Calu3 (cell line): ENCODE measurements at regions of chr15 and their contacts with region 1.

Region 1: DNA sequence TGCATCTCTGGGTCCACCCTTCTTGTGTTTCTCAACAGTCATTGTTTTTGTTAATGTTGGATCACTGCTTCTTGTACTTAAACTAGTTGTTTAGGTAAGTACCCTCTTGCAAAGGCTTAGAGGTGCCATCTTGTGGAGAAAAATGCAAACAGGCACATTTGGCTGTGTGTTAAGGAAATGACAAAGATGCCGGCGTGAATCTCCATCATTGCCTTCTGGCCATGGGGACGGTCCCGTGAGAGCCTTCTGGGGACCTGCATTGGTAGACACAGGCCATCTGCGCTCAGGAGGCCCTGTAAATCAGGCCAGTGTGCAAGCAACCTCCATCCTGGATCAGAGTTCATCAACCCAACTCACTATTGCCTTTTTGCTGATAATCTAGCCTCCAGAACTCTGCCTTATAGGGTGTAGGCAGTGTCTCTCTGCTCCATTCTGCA is 158.6 kb upstream of the NR2E3 start:
- DNase-seq: peak; percentile 44
- H3K4me3 Mint-ChIP-seq: no peak overlapping the region
- H3K27ac Mint-ChIP-seq: no peak overlapping the region
- H3K4me1 Mint-ChIP-seq: peaks cover 7% of the 10 kb centered on the region
- H3K27me3 Mint-ChIP-seq: no peaks in the 10 kb centered on the region
- CTCF ChIP-seq: no peak

Region 2: DNA sequence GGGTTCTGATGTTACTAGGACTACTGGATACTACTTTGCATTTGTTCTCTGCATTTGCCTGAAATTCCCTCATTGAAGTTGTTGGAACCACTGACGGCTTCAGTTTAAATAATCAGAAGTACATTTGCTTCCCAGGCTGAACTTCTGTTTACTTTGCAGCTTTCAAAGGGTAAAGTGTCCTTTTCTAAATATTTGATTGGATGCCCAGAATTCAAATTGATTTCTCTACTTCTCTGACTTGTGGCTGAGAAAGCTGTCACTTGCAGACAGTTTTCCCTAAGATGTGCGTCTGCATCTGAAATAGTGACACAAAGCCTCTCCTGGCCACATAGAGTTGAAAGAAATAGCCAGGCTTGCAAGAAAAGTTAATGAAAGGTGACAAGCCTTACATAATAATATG is 236.9 kb before region 1 on chr15:
- CTCF ChIA-PET with region 1: no interaction called
- intact Hi-C with region 1: no loop called
- DNase-seq: no peak
- H3K4me3 Mint-ChIP-seq: no peak overlapping the region
- H3K27ac Mint-ChIP-seq: no peak overlapping the region
- H3K4me1 Mint-ChIP-seq: peaks cover 28% of the 10 kb centered on the region
- H3K27me3 Mint-ChIP-seq: no peaks in the 10 kb centered on the region
- CTCF ChIP-seq: no peak

Region 3: GRCh38 chr15:71448688-71449114 is 203.1 kb before region 1 on chr15:
- CTCF ChIA-PET with region 1: no interaction called
- intact Hi-C with region 1: loop called (anchors 1 kb)
- DNase-seq: peak; percentile 72
- H3K4me3 Mint-ChIP-seq: no peak overlapping the region
- H3K27ac Mint-ChIP-seq: no peak overlapping the region
- H3K4me1 Mint-ChIP-seq: no peaks in the 10 kb centered on the region
- H3K27me3 Mint-ChIP-seq: no peaks in the 10 kb centered on the region
- CTCF ChIP-seq: peak; percentile 73

Region 4: GRCh38 chr15:71465131-71465530 is 186.6 kb before region 1 on chr15:
- CTCF ChIA-PET with region 1: no interaction called
- intact Hi-C with region 1: no loop called
- DNase-seq: no peak
- H3K4me3 Mint-ChIP-seq: no peak overlapping the region
- H3K27ac Mint-ChIP-seq: no peak overlapping the region
- H3K4me1 Mint-ChIP-seq: no peaks in the 10 kb centered on the region
- H3K27me3 Mint-ChIP-seq: no peaks in the 10 kb centered on the region
- CTCF ChIP-seq: no peak

Region 5: DNA sequence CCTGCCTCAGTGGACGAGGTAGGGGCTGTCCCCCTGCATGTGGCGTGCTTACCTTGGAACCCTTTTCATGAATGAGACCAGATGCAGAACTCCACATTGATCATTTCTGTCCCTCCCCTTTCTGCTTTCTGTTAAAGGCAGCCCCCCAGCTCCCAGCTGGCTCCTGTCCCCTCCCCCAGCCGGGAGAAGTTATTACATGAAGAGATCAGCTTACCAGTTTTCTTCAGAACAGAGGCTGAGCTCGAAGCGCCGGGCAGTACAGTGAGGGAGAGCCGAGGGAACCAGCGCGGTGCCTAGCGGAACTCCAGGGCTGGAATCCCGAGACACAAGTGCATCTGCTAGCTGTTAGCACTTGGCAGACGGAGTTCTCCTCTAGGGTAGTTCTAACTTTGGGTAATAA is 104.8 kb before region 1 on chr15:
- CTCF ChIA-PET with region 1: no interaction called
- intact Hi-C with region 1: no loop called
- DNase-seq: no peak
- H3K4me3 Mint-ChIP-seq: no peak overlapping the region
- H3K27ac Mint-ChIP-seq: no peak overlapping the region
- H3K4me1 Mint-ChIP-seq: no peaks in the 10 kb centered on the region
- H3K27me3 Mint-ChIP-seq: no peaks in the 10 kb centered on the region
- CTCF ChIP-seq: no peak

Region 6: GRCh38 chr15:71575474-71576045 is 76.2 kb before region 1 on chr15:
- CTCF ChIA-PET with region 1: no interaction called
- intact Hi-C with region 1: loop called (anchors 5 kb)
- DNase-seq: no peak
- H3K4me3 Mint-ChIP-seq: no peak overlapping the region
- H3K27ac Mint-ChIP-seq: no peak overlapping the region
- H3K4me1 Mint-ChIP-seq: peaks cover 11% of the 10 kb centered on the region
- H3K27me3 Mint-ChIP-seq: no peaks in the 10 kb centered on the region
- CTCF ChIP-seq: peak; percentile 62

Region 7: GRCh38 chr15:71812966-71813722 is 161.4 kb after region 1 on chr15:
- CTCF ChIA-PET with region 1: no interaction called
- intact Hi-C with region 1: no loop called
- DNase-seq: no peak
- H3K4me3 Mint-ChIP-seq: no peak overlapping the region
- H3K27ac Mint-ChIP-seq: no peak overlapping the region
- H3K4me1 Mint-ChIP-seq: no peaks in the 10 kb centered on the region
- H3K27me3 Mint-ChIP-seq: no peaks in the 10 kb centered on the region
- CTCF ChIP-seq: no peak